ENCODE measurements at regions of chr22 and their contacts with region 1.

Region 1: DNA sequence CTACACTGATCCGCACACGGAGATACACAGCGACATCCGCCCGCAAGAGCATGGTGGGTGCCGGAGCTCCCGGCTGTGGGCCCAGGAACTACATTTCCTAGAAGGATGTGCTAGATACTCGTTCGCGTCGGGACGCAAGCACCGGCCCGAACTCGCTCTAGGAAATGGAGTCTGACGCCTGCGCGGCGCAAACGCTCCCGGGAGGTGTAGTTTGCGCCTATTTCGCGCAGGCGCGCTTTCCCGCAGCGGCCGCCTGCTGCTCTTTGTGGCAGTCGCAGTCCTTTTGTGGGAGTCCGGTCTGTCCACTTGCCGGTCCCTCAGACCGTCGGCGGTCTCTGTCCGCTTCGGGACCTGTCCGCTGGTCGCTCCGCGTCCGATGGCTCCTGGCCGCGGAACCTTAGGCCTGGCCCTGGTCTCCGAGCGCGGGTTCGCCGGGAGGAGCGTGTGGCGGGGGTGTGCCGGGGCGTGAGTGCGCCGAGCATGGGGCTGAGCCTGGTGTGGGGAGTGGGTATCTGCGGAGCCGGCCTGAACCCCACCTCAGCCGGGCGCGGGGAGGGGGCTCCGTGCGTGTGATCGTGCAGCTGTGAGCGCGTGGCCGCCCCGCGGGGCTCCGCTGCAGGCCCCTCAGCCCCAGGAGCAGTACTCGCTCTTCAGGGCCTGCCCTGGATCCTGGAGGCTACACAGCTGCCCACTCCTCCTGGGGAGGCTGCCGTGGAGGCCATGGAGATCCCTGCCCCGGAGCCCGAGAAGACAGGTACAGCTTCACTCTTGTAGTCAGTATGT is at the start of gene ZNF74:
- DNase-seq: peak; percentile 97 to 100 (median 98)
- ATAC-seq: peak; percentile 96
- H3K4me3 ChIP-seq: peak within 1 kb of the TSS; percentile 52
- H3K27ac ChIP-seq: peak within 1 kb of the TSS; percentile 62
- H3K4me1 ChIP-seq: peaks cover 16 to 35% of the 10 kb centered on the region in 2 experiments
- H3K27me3 ChIP-seq: peaks cover 8 to 24% of the 10 kb centered on the region in 2 experiments
- CTCF ChIP-seq: peak in 2 of 3 experiments; percentile 29 to 44; a peak in 4 of 6 replicates
- EP300 ChIP-seq: peak; percentile 51; the same call in 1 of the 2 replicates
- POLR2A ChIP-seq: no peak
- RAD21 ChIP-seq: no peak; a peak in 2 of 4 replicates
- polyA plus RNA-seq, gene ZNF74: 2.4 to 3.7 TPM

Region 2: DNA sequence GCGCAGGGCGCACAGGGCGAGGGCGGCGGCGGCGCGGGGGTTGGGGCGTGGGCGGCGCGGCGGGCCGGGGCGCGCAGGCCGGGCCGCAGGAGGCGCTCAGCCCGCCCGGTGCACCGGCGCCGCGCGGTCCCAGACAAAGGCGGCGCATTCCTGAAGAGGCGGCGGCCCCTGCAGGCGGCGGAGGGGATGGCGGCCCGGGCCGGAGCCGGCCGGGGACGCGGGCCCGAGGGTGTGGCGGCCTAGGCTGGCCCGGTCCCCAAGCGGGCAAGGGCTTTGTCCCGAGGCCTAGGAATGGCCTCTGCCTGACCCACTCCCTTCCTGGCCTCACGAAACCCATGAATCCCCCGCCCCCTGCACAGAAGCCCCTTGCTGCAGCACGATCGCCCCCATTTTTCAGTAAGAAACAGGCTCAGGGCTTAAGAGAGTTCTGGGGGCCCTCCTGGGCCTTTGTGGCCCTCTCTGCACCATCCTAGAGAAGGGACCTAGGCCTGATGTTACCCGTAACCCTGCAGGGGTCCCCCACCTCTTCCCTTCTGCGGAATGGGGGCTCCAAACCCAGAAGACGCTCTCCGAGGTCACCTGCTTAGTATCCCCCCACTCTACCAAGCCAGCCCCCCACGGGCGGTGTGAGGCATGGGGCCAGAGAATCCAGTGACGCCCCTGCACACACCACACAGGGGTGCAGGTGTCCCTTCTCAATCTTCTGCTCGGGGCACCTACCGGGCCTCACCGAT is 125.7 kb before region 1 on chr22 and contains the start of gene RTN4R:
- CTCF ChIA-PET with region 1: no interaction called
- POLR2A ChIA-PET with region 1: no interaction called
- in situ Hi-C with region 1: no loop called
- intact Hi-C with region 1: no loop called
- DNase-seq: peak; percentile 93 to 99 (median 96)
- ATAC-seq: peak; percentile 90
- H3K4me3 ChIP-seq: peak within 1 kb of the TSS; percentile 48
- H3K27ac ChIP-seq: no peak within 1 kb of the TSS
- H3K4me1 ChIP-seq: peaks cover 4 to 69% of the 10 kb centered on the region in 2 experiments; a peak in 4 of 5 replicates
- H3K27me3 ChIP-seq: peaks cover 19 to 69% of the 10 kb centered on the region in 2 experiments; a peak in 4 of 5 replicates
- CTCF ChIP-seq: peak; percentile 87 to 99 (median 98)
- EP300 ChIP-seq: peak; percentile 52
- POLR2A ChIP-seq: no peak
- RAD21 ChIP-seq: peak; percentile 98 to 99
- polyA plus RNA-seq, gene RTN4R: 0.04 TPM in 1 of 2 experiments, not detected in the other

Region 3: DNA sequence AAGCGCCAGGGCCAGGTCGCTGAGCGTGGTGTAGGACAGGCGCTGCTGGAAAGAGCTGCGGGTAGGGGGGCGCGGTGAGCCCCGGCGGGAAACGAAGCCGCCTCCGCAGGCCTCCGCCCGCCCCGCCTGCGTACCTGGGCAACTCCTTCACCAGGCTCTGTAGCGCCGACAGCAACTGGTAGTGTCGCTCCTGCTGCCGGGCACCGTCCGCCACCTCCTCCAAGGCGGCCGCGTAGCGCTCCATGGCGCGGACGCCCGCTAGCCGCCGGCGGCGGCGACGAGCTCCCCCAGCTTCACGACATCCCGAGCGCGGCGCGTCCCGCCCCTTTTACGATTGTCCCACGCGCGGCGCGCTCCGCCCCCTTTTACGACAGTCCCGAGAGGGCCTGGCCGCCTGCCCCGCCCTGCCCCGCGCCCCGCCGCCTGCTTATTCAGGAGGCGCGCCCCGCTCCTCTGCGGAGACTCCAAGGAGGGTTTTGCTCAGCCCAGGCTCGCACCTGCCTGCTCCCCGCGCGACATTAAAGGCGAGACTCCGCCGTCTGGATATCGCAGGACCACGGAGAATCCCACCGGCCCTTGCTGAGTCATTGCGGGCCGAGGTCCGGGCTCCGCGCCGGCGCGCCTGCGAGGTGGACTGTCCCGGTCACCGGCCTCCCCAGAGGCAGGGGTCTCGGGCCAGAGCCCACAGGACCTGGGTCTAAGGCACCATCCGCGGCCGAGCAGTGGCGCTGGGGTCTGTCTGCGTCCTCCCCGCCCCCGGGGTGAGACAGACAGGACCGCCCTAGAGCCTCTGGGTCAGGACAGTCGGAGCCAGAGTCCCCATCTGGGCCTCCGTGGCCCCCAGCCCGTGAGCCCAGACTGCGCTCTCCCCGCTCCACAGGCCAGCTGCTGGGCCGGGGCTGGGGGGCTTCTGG is 74.1 kb before region 1 on chr22 and contains the start of gene DGCR6L:
- CTCF ChIA-PET with region 1: no interaction called
- POLR2A ChIA-PET with region 1: interaction called, 12 read pairs
- in situ Hi-C with region 1: no loop called
- intact Hi-C with region 1: loop called (anchors 2 kb)
- DNase-seq: peak in 3 of 4 experiments; percentile 100
- ATAC-seq: peak; percentile 85
- H3K4me3 ChIP-seq: peak within 1 kb of the TSS; percentile 71
- H3K27ac ChIP-seq: peak within 1 kb of the TSS; percentile 75
- H3K4me1 ChIP-seq: peaks cover 29 to 58% of the 10 kb centered on the region in 2 experiments
- H3K27me3 ChIP-seq: no peaks in the 10 kb centered on the region
- CTCF ChIP-seq: peak in 1 of 3 experiments; percentile 22; a peak in 3 of 6 replicates
- EP300 ChIP-seq: no peak
- POLR2A ChIP-seq: peak; percentile 95
- RAD21 ChIP-seq: peak in 1 of 2 experiments; percentile 19
- polyA plus RNA-seq, gene DGCR6L: 3.6 to 8.1 TPM

Region 4: DNA sequence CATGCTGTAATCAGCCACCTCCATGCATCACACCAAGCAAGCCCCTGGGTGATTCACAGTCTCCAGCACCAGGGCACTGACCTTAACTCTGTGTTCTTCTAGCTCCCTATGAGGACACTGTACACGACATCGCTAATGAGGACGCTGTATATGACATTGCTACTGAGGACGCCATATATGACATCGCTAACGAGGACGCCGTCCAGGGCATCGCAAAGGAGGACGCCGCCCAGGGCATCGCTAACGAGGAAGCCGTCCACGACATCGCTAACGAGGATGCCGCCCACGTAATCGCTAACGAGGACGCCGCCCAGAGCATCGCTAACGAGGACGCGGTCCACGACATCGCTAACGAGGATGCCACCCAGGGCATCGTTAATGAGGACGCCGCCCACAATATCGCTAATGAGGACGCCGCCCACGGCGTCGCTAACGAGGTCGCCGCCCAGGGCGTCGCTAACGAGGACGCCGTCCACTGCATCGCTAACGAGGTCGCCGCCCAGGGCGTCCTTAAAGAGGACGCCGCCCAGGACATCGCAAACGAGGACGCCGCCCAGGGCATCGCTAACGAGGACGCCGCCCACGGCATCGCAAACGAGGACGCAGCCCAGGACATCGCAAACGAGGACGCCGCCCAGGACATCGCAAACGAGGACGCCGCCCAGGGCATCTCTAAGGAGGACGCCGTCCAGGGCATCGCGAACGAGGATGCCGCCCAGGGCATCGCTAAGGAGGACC is 39.7 kb before region 1 on chr22:
- CTCF ChIA-PET with region 1: no interaction called
- POLR2A ChIA-PET with region 1: no interaction called
- in situ Hi-C with region 1: loop called (anchors 10 kb)
- intact Hi-C with region 1: no loop called
- DNase-seq: peak in 1 of 4 experiments; percentile 1
- ATAC-seq: no peak
- H3K4me3 ChIP-seq: no peak overlapping the region
- H3K27ac ChIP-seq: no peak overlapping the region
- H3K4me1 ChIP-seq: peaks cover 0 to 11% of the 10 kb centered on the region in 2 experiments; a peak in 1 of 5 replicates
- H3K27me3 ChIP-seq: peaks cover 2 to 9% of the 10 kb centered on the region in 2 experiments; a peak in 1 of 5 replicates
- CTCF ChIP-seq: no peak
- EP300 ChIP-seq: no peak
- POLR2A ChIP-seq: no peak
- RAD21 ChIP-seq: no peak

Region 5: GRCh38 chr22:20380486-20380885 is 13.6 kb before region 1 on chr22:
- CTCF ChIA-PET with region 1: no interaction called
- POLR2A ChIA-PET with region 1: interaction called, 62 read pairs
- in situ Hi-C with region 1: no loop called
- intact Hi-C with region 1: no loop called
- DNase-seq: peak in 3 of 4 experiments; percentile 20 to 42 (median 28)
- ATAC-seq: 0 out of 3 replicates have a peak, but pooled peaks have one; percentile 20
- H3K4me3 ChIP-seq: no peak overlapping the region
- H3K27ac ChIP-seq: no peak overlapping the region
- H3K4me1 ChIP-seq: no peaks in the 10 kb centered on the region
- H3K27me3 ChIP-seq: peaks cover 64 to 65% of the 10 kb centered on the region in 2 experiments
- CTCF ChIP-seq: no peak
- EP300 ChIP-seq: no peak
- POLR2A ChIP-seq: no peak
- RAD21 ChIP-seq: no peak

Region 6: DNA sequence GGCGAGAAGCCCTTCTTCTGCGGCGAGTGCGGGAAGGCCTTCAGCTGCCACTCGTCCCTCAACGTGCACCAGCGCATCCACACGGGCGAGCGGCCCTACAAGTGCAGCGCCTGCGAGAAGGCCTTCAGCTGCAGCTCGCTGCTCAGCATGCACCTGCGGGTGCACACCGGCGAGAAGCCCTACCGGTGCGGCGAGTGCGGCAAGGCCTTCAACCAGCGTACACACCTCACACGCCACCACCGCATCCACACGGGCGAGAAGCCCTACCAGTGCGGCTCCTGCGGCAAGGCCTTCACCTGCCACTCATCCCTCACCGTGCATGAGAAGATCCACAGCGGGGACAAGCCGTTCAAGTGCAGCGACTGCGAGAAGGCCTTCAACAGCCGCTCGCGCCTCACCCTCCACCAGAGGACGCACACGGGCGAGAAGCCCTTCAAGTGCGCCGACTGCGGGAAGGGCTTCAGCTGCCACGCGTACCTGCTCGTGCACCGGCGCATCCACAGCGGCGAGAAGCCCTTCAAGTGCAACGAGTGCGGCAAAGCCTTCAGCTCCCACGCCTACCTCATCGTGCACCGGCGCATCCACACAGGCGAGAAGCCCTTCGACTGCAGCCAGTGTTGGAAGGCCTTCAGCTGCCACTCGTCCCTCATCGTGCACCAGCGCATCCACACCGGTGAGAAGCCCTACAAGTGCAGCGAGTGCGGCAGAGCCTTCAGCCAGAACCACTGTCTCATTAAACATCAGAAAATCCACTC is 12.0 kb after region 1 on chr22:
- CTCF ChIA-PET with region 1: no interaction called
- POLR2A ChIA-PET with region 1: interaction called, 84 read pairs
- in situ Hi-C with region 1: no loop called
- intact Hi-C with region 1: no loop called
- DNase-seq: peak in 1 of 4 experiments; percentile 33
- ATAC-seq: no peak
- H3K4me3 ChIP-seq: no peak overlapping the region
- H3K27ac ChIP-seq: no peak overlapping the region
- H3K4me1 ChIP-seq: peaks cover 0 to 8% of the 10 kb centered on the region in 2 experiments; a peak in 2 of 5 replicates
- H3K27me3 ChIP-seq: no peaks in the 10 kb centered on the region
- CTCF ChIP-seq: no peak
- EP300 ChIP-seq: no peak
- POLR2A ChIP-seq: 0 out of 2 replicates have a peak, but pooled peaks have one; percentile 5
- RAD21 ChIP-seq: no peak

Region 7: DNA sequence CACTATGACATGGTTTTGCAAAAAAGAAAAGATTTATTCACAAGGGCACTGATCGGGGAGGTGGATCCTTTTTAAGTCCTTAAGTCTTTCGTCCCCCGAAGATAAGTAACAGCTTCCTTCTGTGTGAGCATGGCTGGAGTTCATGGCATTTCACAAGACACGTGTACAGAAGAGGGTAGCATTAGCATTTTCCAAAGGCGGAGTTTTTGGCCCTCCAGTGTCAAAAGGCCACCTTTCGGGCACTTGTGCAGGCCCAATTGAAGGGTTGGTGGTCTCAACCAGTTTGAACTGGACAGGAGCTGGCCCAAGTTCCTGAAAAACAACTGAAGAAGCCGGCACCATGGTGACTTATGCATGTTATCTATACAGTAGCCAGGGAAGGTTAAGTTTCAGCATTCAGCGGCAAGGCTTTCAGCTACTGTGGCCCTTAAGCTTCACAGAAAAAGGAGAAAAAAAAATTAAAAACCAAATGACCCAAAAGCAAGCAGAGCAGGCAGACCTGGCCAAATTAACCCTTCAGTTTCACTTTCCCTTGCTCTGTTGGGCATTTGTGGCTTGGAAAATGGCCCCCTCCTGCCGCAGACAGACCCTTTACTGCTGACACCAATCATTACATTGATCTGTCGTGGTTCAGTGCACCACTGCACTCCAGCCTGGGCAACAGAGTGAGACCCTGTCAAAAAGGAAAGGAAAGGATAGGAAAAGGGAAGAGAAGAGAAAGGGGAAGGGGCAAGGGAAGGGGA is 18.5 kb after region 1 on chr22:
- CTCF ChIA-PET with region 1: interaction called, 3 read pairs
- POLR2A ChIA-PET with region 1: interaction called, 84 read pairs
- in situ Hi-C with region 1: no loop called
- intact Hi-C with region 1: no loop called
- DNase-seq: peak in 1 of 4 experiments; percentile 63
- ATAC-seq: peak; percentile 61
- H3K4me3 ChIP-seq: no peak overlapping the region
- H3K27ac ChIP-seq: peak overlapping the region; percentile 4; the same call in 1 of the 3 replicates
- H3K4me1 ChIP-seq: peaks cover 2 to 9% of the 10 kb centered on the region in 2 experiments; a peak in 4 of 5 replicates
- H3K27me3 ChIP-seq: no peaks in the 10 kb centered on the region
- CTCF ChIP-seq: no peak
- EP300 ChIP-seq: no peak
- POLR2A ChIP-seq: no peak
- RAD21 ChIP-seq: no peak

Region 8: GRCh38 chr22:20499769-20500168 is 105.7 kb after region 1 on chr22:
- CTCF ChIA-PET with region 1: no interaction called
- POLR2A ChIA-PET with region 1: no interaction called
- in situ Hi-C with region 1: no loop called
- intact Hi-C with region 1: no loop called
- DNase-seq: no peak
- ATAC-seq: no peak
- H3K4me3 ChIP-seq: no peak overlapping the region
- H3K27ac ChIP-seq: no peak overlapping the region
- H3K4me1 ChIP-seq: peaks cover 10 to 26% of the 10 kb centered on the region in 2 experiments
- H3K27me3 ChIP-seq: no peaks in the 10 kb centered on the region; a peak in 1 of 5 replicates
- CTCF ChIP-seq: no peak
- EP300 ChIP-seq: no peak
- POLR2A ChIP-seq: no peak
- RAD21 ChIP-seq: no peak

Measured in K562 (cell line).